ENCODE measurements at regions of chr4 and their contacts with region 1.

Region 1: DNA sequence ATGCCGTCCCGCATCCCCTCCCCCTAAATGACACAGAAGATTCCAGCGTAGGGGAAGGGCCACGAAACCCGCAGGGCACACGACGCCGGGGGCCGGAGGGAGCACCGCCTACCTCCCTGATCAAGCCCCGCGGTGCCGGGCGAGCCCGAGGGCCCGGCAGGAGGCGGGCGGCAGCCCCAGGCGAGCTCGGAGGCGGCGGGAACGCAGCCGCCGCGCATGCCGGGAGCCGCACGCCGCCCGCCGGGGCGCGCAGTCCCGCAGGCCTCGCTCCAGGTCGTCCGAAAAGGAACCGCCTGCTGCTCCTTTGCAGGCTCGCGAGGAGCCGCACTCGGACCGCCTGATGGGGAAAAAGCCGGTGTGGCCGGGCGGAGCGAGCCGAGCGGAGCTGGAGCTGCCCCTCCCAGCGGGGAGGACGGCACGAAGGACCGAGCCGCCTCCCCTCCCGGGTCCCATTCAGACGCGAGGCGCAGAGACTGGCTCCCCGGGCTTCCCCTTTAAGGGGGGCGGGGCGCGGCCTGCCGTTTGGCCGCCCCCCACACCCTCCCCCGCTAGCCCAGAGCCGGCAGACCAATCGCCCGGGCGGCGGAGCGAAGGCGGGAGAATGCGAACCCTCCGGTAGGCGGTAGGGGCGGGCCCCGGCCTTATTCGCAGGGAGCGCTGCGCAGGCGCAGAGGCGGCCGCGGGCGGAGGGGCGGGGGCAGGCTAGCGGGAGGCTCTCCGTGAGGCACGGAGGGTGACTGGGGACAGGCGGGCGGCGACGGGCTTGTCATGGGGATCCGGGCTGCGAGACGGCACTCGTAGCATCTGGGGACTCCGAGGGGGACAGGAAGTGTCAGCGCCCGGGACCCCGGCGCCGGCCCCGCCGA is 561 bp upstream of the ING2 start:
- DNase-seq: peak; percentile 99
- H3K4me3 ChIP-seq: peak overlapping the region; percentile 97
- H3K27ac ChIP-seq: peak overlapping the region; percentile 96
- H3K4me1 ChIP-seq: no peaks in the 10 kb centered on the region
- H3K27me3 ChIP-seq: no peaks in the 10 kb centered on the region
- CTCF ChIP-seq: no peak

Region 2: DNA sequence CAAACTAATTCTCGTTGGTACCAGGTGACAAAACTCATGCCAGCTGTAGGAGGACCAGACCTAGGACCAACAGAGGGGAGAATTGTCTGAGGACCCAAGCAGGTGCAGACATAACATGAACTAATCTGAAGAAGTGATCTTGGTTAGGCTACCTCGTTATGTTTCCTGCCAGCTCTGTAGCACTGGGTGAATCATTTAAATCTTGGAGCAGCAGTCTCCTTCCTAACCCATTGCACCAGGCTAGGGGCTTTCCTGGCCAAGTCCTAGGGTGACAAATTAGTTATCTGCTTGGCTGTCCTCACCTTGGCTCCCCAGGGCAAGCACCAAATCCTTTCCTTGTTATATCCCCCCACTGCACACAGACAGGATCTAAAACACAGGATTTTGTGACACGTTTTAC is 317.5 kb before region 1 on chr4:
- intact Hi-C with region 1: no loop called
- DNase-seq: no peak
- H3K4me3 ChIP-seq: no peak overlapping the region
- H3K27ac ChIP-seq: no peak overlapping the region
- H3K4me1 ChIP-seq: no peaks in the 10 kb centered on the region
- H3K27me3 ChIP-seq: no peaks in the 10 kb centered on the region
- CTCF ChIP-seq: no peak

Region 3: GRCh38 chr4:183455431-183456195 is 48.7 kb before region 1 on chr4:
- intact Hi-C with region 1: loop called (anchors 10 kb)
- DNase-seq: no peak
- H3K4me3 ChIP-seq: no peak overlapping the region
- H3K27ac ChIP-seq: no peak overlapping the region
- H3K4me1 ChIP-seq: no peaks in the 10 kb centered on the region
- H3K27me3 ChIP-seq: no peaks in the 10 kb centered on the region
- CTCF ChIP-seq: no peak

Region 4: DNA sequence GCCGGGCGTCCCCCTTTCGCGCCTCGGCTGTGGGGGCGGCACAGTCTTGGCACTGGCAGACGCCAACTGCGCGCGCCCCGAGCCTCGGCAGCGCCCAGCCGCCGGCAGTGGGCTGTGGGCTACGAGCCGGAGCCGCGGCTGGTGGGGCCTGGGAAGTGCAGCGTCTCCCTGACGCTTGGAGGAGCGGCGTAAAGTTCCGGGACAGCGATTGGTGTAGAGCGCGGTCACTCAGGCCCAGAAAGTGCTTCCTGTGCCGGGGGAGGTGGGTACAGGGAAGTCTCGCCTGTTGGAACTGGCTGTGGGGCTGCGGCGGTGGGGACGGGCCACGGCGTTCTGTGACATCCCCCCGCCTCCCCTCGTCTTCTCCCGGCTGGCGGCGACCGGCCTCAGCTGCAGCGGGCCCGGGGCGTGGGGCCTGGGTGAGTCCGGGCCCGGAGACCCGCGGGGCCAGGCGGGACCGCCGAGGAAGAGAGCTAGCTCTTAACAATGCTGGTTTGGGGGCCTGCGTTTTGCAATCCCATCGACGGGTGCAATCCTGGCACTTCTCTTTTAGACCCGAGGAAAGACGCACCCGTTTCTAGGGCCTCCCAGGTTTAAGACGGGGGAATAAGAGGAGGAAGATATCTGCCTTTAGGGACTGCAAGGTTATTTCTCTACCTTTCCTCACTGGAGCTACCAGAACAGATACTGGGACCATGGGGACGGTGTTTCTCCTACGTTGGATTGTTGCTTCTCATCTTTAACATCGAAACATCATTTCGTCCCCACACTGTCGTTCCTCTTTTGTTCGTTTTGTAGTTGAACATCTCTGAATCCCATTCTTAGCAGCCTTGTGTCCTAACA is 155.0 kb after region 1 on chr4 and contains the starts of genes RWDD4 and TRAPPC11:
- intact Hi-C with region 1: loop called (anchors 5 kb)
- DNase-seq: peak; percentile 98
- H3K4me3 ChIP-seq: peak within 1 kb of the TSS; percentile 88
- H3K27ac ChIP-seq: peak within 1 kb of the TSS; percentile 92
- H3K4me1 ChIP-seq: no peaks in the 10 kb centered on the region
- H3K27me3 ChIP-seq: no peaks in the 10 kb centered on the region
- CTCF ChIP-seq: no peak
- total RNA-seq, gene RWDD4: 17.1 to 19.3 TPM
- total RNA-seq, gene TRAPPC11: 25.2 to 29.2 TPM

Measured in colonic mucosa (tissue), 4 donors.